Activated CD4-positive, alpha-beta memory T cell treated with anti-CD3 and anti-CD28 coated beads, Interleukin-2, amount 10 ng/mL, durations not matched to agents 7 days and 5 days (primary cell): ENCODE measurements at regions of chr6 and their contacts with region 1.

Region 1: DNA sequence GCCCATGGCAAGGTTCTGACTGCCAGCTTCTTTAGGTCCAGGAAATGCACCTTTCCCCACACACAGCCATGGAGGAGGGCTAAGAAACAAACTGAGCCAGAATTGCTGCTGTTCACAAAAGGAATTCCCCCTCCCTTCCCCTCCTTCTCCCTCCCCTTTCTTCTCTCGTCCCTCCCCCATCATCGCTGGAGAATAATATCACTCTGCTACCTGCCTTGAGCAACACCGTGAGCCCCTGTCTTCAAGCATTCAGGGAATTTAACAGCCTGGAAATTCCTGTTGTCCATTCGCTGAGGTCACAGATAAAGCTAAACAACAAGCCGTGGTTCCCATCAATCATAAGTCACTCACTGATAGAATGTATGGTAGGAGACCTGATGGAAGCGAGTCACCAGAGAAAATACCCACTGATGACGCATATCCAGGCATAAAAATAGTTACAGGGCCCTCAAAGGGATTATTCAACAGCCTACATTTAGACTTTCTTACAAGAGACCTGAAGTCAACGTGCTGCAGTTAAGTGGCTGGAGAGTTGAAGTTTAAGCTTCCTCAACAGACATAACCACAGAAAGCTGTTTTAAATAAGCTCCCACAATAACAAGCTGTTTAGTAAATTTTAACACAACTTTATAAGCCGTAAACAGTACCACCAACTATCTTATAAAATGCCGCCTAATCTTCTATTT is 59.7 kb downstream of the HIVEP2 start:
- DNase-seq: peak; percentile 35
- H3K4me3 Mint-ChIP-seq: peak overlapping the region; percentile 84
- H3K27ac Mint-ChIP-seq: peak overlapping the region; percentile 93
- H3K4me1 Mint-ChIP-seq: peaks cover 71% of the 10 kb centered on the region
- H3K27me3 Mint-ChIP-seq: no peaks in the 10 kb centered on the region

Region 2: DNA sequence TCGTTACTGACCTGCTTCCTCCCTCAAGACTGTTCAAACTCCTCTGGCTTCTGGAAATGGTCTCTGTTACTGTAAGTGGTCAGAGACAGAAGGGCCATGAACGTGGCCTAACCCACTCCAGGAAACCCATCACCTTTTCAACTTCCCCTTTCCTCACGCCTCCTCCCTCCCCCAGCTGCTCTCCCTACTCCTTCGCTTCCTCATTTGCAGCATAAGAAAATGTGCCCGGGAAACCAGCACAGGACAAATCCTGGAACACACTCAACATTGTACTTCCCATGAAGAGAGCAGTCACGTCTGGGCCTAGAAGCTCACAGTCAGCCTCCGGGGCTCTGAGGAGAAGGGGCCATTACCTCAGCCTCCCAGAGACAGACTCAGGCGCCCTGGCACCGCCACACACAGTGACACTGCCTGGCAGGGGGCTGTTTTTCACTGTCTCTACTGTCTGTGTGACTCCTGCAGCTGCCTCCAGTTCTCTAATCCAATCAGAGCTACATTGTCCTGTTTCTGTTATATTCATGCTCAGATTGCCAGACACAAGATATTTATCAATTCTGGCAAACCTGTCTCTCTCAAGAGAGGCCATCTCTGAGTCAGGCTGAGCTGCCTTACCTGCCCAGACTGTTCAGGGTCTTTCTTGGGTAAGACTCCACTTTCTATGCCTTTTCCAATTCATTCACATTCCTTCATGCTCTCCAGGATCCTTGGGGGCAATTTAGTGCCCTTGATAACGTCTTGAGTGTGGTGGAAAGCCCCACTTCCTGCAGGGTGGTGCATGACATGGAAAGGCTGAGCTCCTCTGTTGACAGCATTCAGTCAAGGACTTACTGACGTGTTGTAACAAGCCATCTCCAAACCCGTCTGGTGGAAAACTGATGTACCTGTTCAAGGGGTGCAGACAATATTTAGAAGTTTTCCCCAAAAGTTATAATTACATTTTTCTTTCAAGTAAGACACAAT is 182.5 kb before region 1 on chr6:
- CTCF ChIA-PET with region 1: no interaction called
- POLR2A ChIA-PET with region 1: no interaction called
- DNase-seq: no peak
- H3K4me3 Mint-ChIP-seq: no peak overlapping the region
- H3K27ac Mint-ChIP-seq: no peak overlapping the region
- H3K4me1 Mint-ChIP-seq: peaks cover 5% of the 10 kb centered on the region
- H3K27me3 Mint-ChIP-seq: no peaks in the 10 kb centered on the region

Region 3: GRCh38 chr6:142784344-142784743 is 101.0 kb before region 1 on chr6:
- CTCF ChIA-PET with region 1: no interaction called
- POLR2A ChIA-PET with region 1: no interaction called
- DNase-seq: no peak
- H3K4me3 Mint-ChIP-seq: no peak overlapping the region
- H3K27ac Mint-ChIP-seq: no peak overlapping the region
- H3K4me1 Mint-ChIP-seq: peaks cover 9% of the 10 kb centered on the region
- H3K27me3 Mint-ChIP-seq: no peaks in the 10 kb centered on the region

Region 4: GRCh38 chr6:142850679-142851423 is 34.5 kb before region 1 on chr6:
- CTCF ChIA-PET with region 1: interaction called, 3 read pairs
- POLR2A ChIA-PET with region 1: interaction called, 64 read pairs
- DNase-seq: peak; percentile 52
- H3K4me3 Mint-ChIP-seq: peak overlapping the region; percentile 4
- H3K27ac Mint-ChIP-seq: peak overlapping the region; percentile 44
- H3K4me1 Mint-ChIP-seq: peaks cover 93% of the 10 kb centered on the region
- H3K27me3 Mint-ChIP-seq: no peaks in the 10 kb centered on the region

Region 5: DNA sequence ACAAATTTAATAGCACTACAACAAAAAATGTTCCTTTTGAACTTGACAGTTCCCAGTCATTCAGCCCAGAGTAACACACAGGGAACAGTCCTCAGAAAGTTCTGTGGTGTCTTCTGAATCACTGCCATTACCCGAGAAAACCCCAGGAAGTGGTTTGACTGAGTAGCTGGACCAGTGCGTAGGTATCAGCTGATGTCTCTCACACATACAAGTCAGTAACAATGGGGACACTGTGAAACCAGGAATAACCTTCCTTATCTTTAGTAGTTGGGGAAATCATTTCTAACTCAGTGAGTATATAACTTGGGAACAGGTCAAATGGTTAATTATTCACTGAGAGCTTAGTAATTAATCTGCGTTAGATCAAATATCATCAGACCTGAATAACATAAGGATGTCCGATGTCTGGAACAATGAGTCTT is 13.4 kb before region 1 on chr6:
- CTCF ChIA-PET with region 1: interaction called, 10 read pairs
- POLR2A ChIA-PET with region 1: interaction called, 48 read pairs
- DNase-seq: peak; percentile 69
- H3K4me3 Mint-ChIP-seq: peak overlapping the region; percentile 11
- H3K27ac Mint-ChIP-seq: peak overlapping the region; percentile 56
- H3K4me1 Mint-ChIP-seq: peaks cover 76% of the 10 kb centered on the region
- H3K27me3 Mint-ChIP-seq: no peaks in the 10 kb centered on the region

Region 6: GRCh38 chr6:142913511-142914047 is 28.3 kb after region 1 on chr6:
- CTCF ChIA-PET with region 1: no interaction called
- POLR2A ChIA-PET with region 1: interaction called, 10 read pairs
- DNase-seq: peak; percentile 81
- H3K4me3 Mint-ChIP-seq: peak overlapping the region; percentile 75
- H3K27ac Mint-ChIP-seq: peak overlapping the region; percentile 99
- H3K4me1 Mint-ChIP-seq: peaks cover 67% of the 10 kb centered on the region
- H3K27me3 Mint-ChIP-seq: no peaks in the 10 kb centered on the region

Region 7: DNA sequence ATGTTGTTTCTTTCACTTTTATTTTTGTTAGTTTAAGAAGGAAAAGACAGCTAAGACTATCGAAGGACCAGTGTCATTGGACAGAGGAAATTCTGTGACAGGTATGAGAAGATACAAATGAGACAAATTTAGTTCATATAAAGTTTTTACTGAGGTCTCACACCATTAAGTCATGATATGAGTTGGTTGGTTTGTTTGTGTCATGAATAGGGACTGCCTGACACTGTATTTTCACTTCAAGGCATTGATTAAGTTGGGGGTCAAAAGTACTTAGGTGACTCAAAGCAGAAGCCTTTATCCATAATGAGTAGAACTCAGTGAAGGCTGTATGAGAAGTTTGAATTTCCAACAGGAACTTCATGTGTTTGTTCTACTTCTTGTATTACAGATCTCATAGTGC is 81.0 kb after region 1 on chr6:
- CTCF ChIA-PET with region 1: no interaction called
- POLR2A ChIA-PET with region 1: no interaction called
- DNase-seq: no peak
- H3K4me3 Mint-ChIP-seq: no peak overlapping the region
- H3K27ac Mint-ChIP-seq: no peak overlapping the region
- H3K4me1 Mint-ChIP-seq: peaks cover 2% of the 10 kb centered on the region
- H3K27me3 Mint-ChIP-seq: no peaks in the 10 kb centered on the region